ENCODE measurements at regions of chr15 and their contacts with region 1.

Region 1: DNA sequence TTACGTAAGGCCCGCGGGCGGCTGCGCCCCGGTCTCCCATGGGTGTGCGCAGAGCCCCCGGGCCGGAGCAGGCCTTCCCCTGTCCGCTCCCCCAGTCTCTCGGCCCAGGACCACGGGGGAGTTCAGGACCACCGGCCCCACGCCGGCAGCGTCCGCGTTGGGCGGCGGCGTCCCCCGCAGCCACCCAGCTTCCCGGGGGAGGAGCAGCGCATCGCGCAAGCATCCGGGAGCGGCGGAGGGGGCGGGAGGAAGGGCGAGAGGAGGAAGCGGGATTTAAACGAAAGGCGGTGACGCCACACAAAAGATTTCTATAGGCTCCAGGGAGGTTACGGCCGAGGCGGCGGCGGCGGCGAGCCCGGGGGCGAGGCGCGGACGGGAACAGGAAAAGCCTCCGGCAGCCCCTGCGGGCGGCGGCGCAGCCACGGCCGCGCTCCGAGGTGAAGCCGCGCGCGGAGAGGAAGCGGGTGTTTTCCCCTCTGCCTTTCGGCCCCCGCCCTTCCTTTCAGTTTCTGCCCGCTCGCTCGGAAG is at the start of gene TLNRD1:
- DNase-seq: peak; percentile 91
- ATAC-seq: peak; percentile 69
- H3K4me3 Mint-ChIP-seq: peak within 1 kb of the TSS; percentile 94
- H3K27ac Mint-ChIP-seq: peak within 1 kb of the TSS; percentile 98
- H3K4me1 Mint-ChIP-seq: peaks cover 49% of the 10 kb centered on the region
- H3K27me3 Mint-ChIP-seq: no peaks in the 10 kb centered on the region
- CTCF ChIP-seq: no peak
- total RNA-seq, gene TLNRD1: 19.3 to 20.1 TPM

Region 2: GRCh38 chr15:80989518-80990478 is 10.9 kb before region 1 on chr15 and contains the start of gene MESD:
- CTCF ChIA-PET with region 1: interaction called, 5 read pairs
- POLR2A ChIA-PET with region 1: interaction called, 29 read pairs
- intact Hi-C with region 1: no loop called
- DNase-seq: peak; percentile 99
- ATAC-seq: peak; percentile 99
- H3K4me3 Mint-ChIP-seq: peak within 1 kb of the TSS; percentile 95
- H3K27ac Mint-ChIP-seq: peak within 1 kb of the TSS; percentile 93
- H3K4me1 Mint-ChIP-seq: peaks cover 44% of the 10 kb centered on the region
- H3K27me3 Mint-ChIP-seq: no peaks in the 10 kb centered on the region
- CTCF ChIP-seq: no peak
- total RNA-seq, gene MESD: 15.8 to 16.5 TPM

Measured in activated CD8-positive, alpha-beta T cell treated with anti-CD3 and anti-CD28 coated beads for 36 hours (primary cell).